Psoas muscle (tissue), 8 donors: ENCODE measurements at regions of chr12 and their contacts with region 1.

Region 1: DNA sequence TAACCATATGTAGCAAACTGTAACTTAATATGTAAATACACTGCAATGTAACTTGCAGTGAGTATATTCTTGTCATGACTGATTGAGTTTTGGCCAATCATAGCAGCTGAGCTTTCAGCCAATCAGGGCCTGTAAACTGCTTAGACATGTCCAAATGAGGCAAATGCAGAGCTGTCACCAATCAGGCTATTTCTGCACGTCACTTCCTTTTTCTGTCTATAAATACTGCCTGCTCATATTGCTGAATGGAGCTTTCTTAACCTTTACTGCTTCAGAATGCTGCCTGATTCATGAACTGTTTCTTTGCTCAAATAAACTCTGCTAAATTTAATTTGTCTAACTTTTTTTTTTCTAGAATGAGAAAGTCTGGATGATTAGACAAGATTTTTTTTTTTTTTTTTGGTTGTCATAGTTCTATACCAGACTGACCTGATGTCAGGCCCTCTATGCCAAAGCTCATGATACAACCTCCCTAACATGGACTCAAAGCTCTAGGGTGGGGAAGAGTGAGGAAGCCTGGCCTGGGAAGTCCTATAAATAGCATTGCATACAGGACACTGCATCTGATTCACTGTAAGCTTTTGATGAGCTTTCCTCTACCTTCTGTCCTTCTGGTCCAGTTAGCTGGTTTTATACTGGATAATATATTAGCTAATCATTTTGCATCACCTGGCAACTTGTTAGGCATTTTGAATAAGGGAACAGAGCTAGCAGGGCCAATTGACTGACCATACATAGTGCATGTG is 12.0 kb downstream of the MGP start:
- DNase-seq: no peak
- ATAC-seq: no peak
- H3K4me3 ChIP-seq: no peak overlapping the region
- H3K27ac ChIP-seq: no peak overlapping the region
- H3K4me1 ChIP-seq: no peaks in the 10 kb centered on the region
- H3K27me3 ChIP-seq: peaks cover 0 to 2% (median 0%) of the 10 kb centered on the region in 3 donors
- CTCF ChIP-seq: no peak

Region 2: GRCh38 chr12:14905269-14906004 is 31.8 kb after region 1 on chr12:
- intact Hi-C with region 1: loop called in 1 of 2 experiments (anchors 5 kb)
- DNase-seq: no peak
- ATAC-seq: peak in 1 of 4 donors; percentile 30
- H3K4me3 ChIP-seq: no peak overlapping the region
- H3K27ac ChIP-seq: no peak overlapping the region
- H3K4me1 ChIP-seq: no peaks in the 10 kb centered on the region
- H3K27me3 ChIP-seq: no peaks in the 10 kb centered on the region
- CTCF ChIP-seq: no peak

Region 3: GRCh38 chr12:15151161-15152120 is 277.8 kb after region 1 on chr12:
- intact Hi-C with region 1: no loop called
- DNase-seq: no peak
- ATAC-seq: peak in 2 of 4 donors; percentile 49 to 60
- H3K4me3 ChIP-seq: no peak overlapping the region
- H3K27ac ChIP-seq: no peak overlapping the region
- H3K4me1 ChIP-seq: no peaks in the 10 kb centered on the region
- H3K27me3 ChIP-seq: no peaks in the 10 kb centered on the region
- CTCF ChIP-seq: peak; percentile 52